A549 (cell line): ENCODE measurements at regions of chr11 and their contacts with region 1.

Region 1: GRCh38 chr11:72080256-72080974 is at the starts of genes LRRC51 and NUMA1:
- DNase-seq: peak; percentile 91 to 100
- ATAC-seq: peak; percentile 96 to 97
- H3K4me3 ChIP-seq: peak within 1 kb of the TSS; percentile 85
- H3K27ac ChIP-seq: peak within 1 kb of the TSS; percentile 90
- H3K4me1 ChIP-seq: peaks cover 19% of the 10 kb centered on the region
- CTCF ChIP-seq: no peak
- EP300 ChIP-seq: no peak
- POLR2A ChIP-seq: peak; percentile 54
- RAD21 ChIP-seq: no peak
- polyA plus RNA-seq, gene LRRC51: 14.3 and 16.3 TPM in 2 replicates
- polyA plus RNA-seq, gene NUMA1: 51.5 and 64.6 TPM in 2 replicates

Region 2: DNA sequence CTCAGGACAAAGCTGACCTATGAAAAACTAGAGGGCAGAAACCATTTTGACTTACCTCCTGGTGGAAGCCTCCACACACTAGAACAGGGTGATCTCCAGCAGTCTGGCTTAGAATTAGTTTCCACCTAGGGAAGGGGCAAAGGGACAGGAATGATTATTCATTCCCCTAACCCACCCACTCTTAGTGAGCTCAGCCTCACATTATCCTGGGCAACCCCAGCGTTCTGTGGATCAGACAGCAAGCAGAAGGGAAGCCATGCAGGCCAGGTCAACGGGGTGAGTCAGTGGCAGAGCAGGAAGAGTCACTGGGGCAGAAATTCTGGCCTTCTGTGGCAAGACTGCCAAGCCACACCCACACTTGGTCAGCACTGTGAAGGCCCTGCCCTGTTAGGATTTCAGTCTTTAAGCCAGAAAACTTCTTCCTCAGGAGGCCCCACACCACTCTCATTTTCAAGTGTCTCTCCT is 10.6 kb before region 1 on chr11:
- CTCF ChIA-PET with region 1: interaction called, 13 read pairs
- POLR2A ChIA-PET with region 1: interaction called, 3 read pairs
- DNase-seq: peak; percentile 59 to 78
- ATAC-seq: peak; percentile 99
- H3K4me3 ChIP-seq: no peak overlapping the region
- H3K27ac ChIP-seq: peak overlapping the region; percentile 58 to 86
- H3K4me1 ChIP-seq: peaks cover 55% of the 10 kb centered on the region
- CTCF ChIP-seq: no peak
- EP300 ChIP-seq: no peak
- POLR2A ChIP-seq: peak; percentile 28; the same call in 1 of the 2 replicates
- RAD21 ChIP-seq: no peak

Region 3: GRCh38 chr11:72160319-72160718 is 79.9 kb after region 1 on chr11:
- CTCF ChIA-PET with region 1: no interaction called
- POLR2A ChIA-PET with region 1: no interaction called
- DNase-seq: no peak
- ATAC-seq: no peak
- H3K4me3 ChIP-seq: no peak overlapping the region
- H3K27ac ChIP-seq: no peak overlapping the region
- H3K4me1 ChIP-seq: peaks cover 9% of the 10 kb centered on the region
- CTCF ChIP-seq: no peak
- EP300 ChIP-seq: no peak
- POLR2A ChIP-seq: no peak
- RAD21 ChIP-seq: no peak

Region 4: DNA sequence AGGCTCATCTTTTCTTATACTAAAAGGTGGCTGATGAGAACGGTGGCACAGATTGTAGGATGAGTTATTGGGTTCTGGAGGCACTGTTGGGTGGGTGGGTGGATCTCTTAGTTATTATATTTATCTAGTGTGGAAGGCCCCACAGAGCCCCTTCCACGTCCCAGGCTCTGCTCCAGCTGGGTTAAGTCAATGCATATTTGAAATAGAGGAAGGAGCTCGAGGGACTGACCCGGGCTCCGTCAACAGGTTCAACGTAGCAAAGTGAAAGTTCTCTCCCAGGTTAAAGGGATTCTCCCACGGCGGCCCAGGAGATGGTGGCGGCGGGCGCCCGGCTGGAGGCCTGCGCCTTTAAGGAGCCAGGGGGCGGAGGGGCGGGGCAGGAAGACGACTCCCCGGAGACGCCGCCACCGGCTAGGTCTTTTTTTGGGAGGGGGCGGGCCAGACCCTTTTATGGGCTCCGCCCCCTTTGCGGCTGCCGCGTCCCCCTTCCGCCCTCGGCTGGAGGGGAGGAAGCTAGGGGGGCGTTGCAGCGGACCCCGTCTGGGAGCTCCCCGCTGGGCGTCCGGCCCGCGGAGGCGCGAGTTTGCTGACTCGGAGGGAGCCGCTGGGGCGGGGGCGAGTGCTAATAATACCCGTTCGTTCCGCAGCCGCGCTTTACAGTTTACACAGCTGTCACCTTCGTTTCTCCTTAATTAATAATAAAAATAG is 142.6 kb after region 1 on chr11:
- CTCF ChIA-PET with region 1: no interaction called
- POLR2A ChIA-PET with region 1: no interaction called
- DNase-seq: peak; percentile 53 to 92
- ATAC-seq: peak; percentile 75 to 88
- H3K4me3 ChIP-seq: peak overlapping the region; percentile 92
- H3K27ac ChIP-seq: peak overlapping the region; percentile 97 to 98
- H3K4me1 ChIP-seq: peaks cover 24% of the 10 kb centered on the region
- CTCF ChIP-seq: no peak
- EP300 ChIP-seq: no peak
- POLR2A ChIP-seq: no peak
- RAD21 ChIP-seq: no peak